Activated CD8-positive, alpha-beta memory T cell treated with anti-CD3 and anti-CD28 coated beads, Interleukin-2, amount 10 ng/mL, durations not matched to agents 7 days and 5 days (primary cell): ENCODE measurements at regions of chr17 and their contacts with region 1.

Region 1: DNA sequence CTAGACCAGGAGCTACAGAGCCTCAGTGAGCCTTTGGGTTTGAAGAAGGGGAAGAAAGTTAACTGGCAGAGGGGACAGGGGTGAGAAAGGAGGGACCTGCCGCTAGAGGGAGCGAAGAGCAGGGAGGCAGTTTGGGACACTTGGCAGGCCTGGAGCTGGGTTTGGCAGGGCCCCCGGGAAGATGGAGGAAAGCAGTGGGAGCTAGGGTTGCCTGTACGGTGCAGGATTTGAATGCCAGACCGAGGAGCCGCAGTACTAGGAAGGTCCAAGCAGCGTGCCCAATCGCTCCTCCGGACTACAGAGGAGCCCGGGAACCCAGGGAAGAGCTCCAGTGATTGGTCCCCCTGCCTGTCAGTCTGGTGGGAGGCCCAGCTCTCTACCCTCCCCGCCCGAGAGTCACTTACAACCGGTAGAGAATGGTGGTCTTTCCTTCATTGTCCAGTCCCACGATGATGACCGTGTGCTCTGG is 1.3 kb downstream of the ARL5C start:
- DNase-seq: peak; percentile 90
- ATAC-seq: peak; percentile 95
- H3K4me3 Mint-ChIP-seq: peak overlapping the region; percentile 81
- H3K27ac Mint-ChIP-seq: peak overlapping the region; percentile 76
- H3K4me1 Mint-ChIP-seq: peaks cover 42% of the 10 kb centered on the region
- H3K27me3 Mint-ChIP-seq: peaks cover 20% of the 10 kb centered on the region

Region 2: GRCh38 chr17:39057701-39058206 is 107.0 kb before region 1 on chr17:
- CTCF ChIA-PET with region 1: interaction called, 12 read pairs
- DNase-seq: no peak
- ATAC-seq: no peak
- H3K4me3 Mint-ChIP-seq: peak overlapping the region; percentile 74
- H3K27ac Mint-ChIP-seq: peak overlapping the region; percentile 82
- H3K4me1 Mint-ChIP-seq: peaks cover 19% of the 10 kb centered on the region
- H3K27me3 Mint-ChIP-seq: peaks cover 13% of the 10 kb centered on the region

Region 3: GRCh38 chr17:39096508-39097149 is 68.1 kb before region 1 on chr17:
- CTCF ChIA-PET with region 1: interaction called, 10 read pairs
- DNase-seq: peak; percentile 87
- ATAC-seq: peak; percentile 57
- H3K4me3 Mint-ChIP-seq: peak overlapping the region; percentile 64
- H3K27ac Mint-ChIP-seq: peak overlapping the region; percentile 92
- H3K4me1 Mint-ChIP-seq: peaks cover 57% of the 10 kb centered on the region
- H3K27me3 Mint-ChIP-seq: peaks cover 6% of the 10 kb centered on the region

Region 4: GRCh38 chr17:39199820-39200069 is 35.0 kb after region 1 on chr17:
- CTCF ChIA-PET with region 1: interaction called, 36 read pairs
- DNase-seq: peak; percentile 95
- ATAC-seq: peak; percentile 62
- H3K4me3 Mint-ChIP-seq: peak overlapping the region; percentile 89
- H3K27ac Mint-ChIP-seq: peak overlapping the region; percentile 99
- H3K4me1 Mint-ChIP-seq: peaks cover 57% of the 10 kb centered on the region
- H3K27me3 Mint-ChIP-seq: no peaks in the 10 kb centered on the region

Region 5: GRCh38 chr17:39235555-39236449 is 71.1 kb after region 1 on chr17:
- CTCF ChIA-PET with region 1: interaction called, 44 read pairs
- DNase-seq: peak; percentile 75
- ATAC-seq: peak; percentile 72
- H3K4me3 Mint-ChIP-seq: no peak overlapping the region
- H3K27ac Mint-ChIP-seq: no peak overlapping the region
- H3K4me1 Mint-ChIP-seq: peaks cover 25% of the 10 kb centered on the region
- H3K27me3 Mint-ChIP-seq: peaks cover 12% of the 10 kb centered on the region

Region 6: GRCh38 chr17:39244600-39245570 is 80.2 kb after region 1 on chr17:
- CTCF ChIA-PET with region 1: interaction called, 47 read pairs
- DNase-seq: peak; percentile 91
- ATAC-seq: peak; percentile 90
- H3K4me3 Mint-ChIP-seq: no peak overlapping the region
- H3K27ac Mint-ChIP-seq: no peak overlapping the region
- H3K4me1 Mint-ChIP-seq: peaks cover 13% of the 10 kb centered on the region
- H3K27me3 Mint-ChIP-seq: no peaks in the 10 kb centered on the region